ENCODE measurements at regions of chr11 and their contacts with region 1.

Region 1: DNA sequence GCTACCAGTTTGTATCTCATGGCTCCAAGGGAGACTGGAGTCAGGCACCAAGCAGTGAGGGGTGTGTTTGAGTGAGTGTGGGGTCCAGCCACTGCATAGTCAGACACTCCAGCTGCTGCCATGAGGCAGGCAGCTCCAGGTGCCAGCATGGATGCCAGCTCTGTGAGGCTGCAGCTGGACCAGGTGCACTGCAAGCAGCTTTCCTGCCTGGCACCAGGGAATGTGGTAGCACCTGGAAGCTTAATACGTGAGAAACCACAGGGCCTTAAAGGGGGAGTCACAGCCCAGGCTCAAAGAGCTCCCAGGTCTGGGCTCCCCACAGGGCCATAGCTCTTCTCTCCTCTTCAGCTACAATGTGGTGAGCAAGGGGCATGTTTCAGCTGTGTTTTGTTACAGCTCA is 817.8 kb upstream of the LUZP2 start:
- DNase-seq: peak; percentile 64
- H3K4me3 ChIP-seq: no peak overlapping the region
- H3K27ac ChIP-seq: no peak overlapping the region
- H3K4me1 ChIP-seq: no peaks in the 10 kb centered on the region
- H3K27me3 ChIP-seq: no peaks in the 10 kb centered on the region
- CTCF ChIP-seq: no peak
- POLR2A ChIP-seq: no peak

Region 2: GRCh38 chr11:23611726-23612125 is 67.3 kb before region 1 on chr11:
- intact Hi-C with region 1: loop called (anchors 10 kb)
- DNase-seq: no peak
- H3K4me3 ChIP-seq: no peak overlapping the region
- H3K27ac ChIP-seq: no peak overlapping the region
- H3K4me1 ChIP-seq: no peaks in the 10 kb centered on the region
- H3K27me3 ChIP-seq: no peaks in the 10 kb centered on the region
- CTCF ChIP-seq: no peak
- POLR2A ChIP-seq: no peak